ENCODE measurements at regions of chr2 and their contacts with region 1.

Region 1: DNA sequence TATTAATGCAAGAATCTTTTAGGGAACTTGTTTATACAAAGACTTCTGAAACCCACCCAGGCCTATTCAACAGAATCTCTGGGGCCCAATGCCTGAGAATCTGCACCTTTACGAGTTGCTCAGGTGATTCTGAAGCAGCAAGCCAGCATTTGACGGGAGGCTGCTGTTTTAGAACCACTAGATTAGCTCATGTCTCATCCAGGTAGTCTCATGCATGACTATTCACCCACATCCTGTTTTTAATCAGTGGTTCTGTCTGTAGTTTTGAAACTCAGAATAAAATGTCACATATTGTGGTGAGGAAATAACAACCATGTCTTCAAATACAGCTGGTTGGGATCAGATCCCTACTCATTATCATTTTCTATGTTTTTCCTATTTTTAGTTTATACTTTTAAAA is 39.5 kb downstream of the CYTIP start:
- DNase-seq: peak; percentile 85
- ATAC-seq: peak; percentile 99
- H3K4me3 ChIP-seq: no peak overlapping the region
- H3K27ac ChIP-seq: no peak overlapping the region; the same call in 1 of the 2 replicates
- H3K4me1 ChIP-seq: peaks cover 7% of the 10 kb centered on the region
- H3K27me3 ChIP-seq: no peaks in the 10 kb centered on the region
- CTCF ChIP-seq: no peak
- EP300 ChIP-seq: peak; percentile 87 to 92
- POLR2A ChIP-seq: no peak
- RAD21 ChIP-seq: 0 out of 2 replicates have a peak, but pooled peaks have one; percentile 17

Region 2: GRCh38 chr2:157363612-157364101 is 40.7 kb before region 1 on chr2:
- CTCF ChIA-PET with region 1: interaction called, 13 read pairs
- POLR2A ChIA-PET with region 1: interaction called, 3 read pairs
- RAD21 ChIA-PET with region 1: interaction called, 21 read pairs
- SMC1A ChIA-PET with region 1: interaction called, 44 read pairs
- in situ Hi-C with region 1: no loop called
- intact Hi-C with region 1: loop called (anchors 2 kb)
- DNase-seq: peak; percentile 50
- ATAC-seq: peak; percentile 72
- H3K4me3 ChIP-seq: no peak overlapping the region
- H3K27ac ChIP-seq: peak overlapping the region; percentile 56
- H3K4me1 ChIP-seq: peaks cover 14% of the 10 kb centered on the region
- H3K27me3 ChIP-seq: no peaks in the 10 kb centered on the region
- CTCF ChIP-seq: no peak
- EP300 ChIP-seq: no peak
- POLR2A ChIP-seq: no peak
- RAD21 ChIP-seq: no peak

Region 3: DNA sequence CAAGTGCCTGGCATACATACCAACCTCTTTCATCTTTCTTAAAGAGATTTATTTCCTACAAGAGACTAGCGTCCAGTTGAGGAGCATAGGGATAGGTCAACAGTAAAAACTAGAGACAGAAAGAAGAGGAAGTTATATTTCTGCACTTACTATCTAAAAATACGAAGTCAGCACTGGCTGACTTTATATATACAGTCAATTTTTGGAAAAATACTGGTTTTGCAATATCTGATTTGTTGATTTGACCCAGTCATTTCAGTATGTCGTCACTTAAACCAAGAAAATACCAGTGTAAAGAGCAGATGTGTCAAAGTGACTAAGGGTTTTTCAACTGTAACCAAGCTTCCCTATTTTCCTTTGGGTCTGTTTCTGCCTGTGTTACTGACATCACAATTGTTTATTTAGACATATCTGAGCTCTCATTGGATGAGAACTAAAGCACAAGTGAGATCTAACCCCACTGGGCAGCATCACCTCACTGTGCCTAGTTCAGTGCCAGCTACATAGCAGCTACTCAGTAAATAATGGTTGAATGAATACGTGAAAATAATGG is 16.5 kb after region 1 on chr2:
- CTCF ChIA-PET with region 1: interaction called, 3 read pairs
- POLR2A ChIA-PET with region 1: no interaction called
- RAD21 ChIA-PET with region 1: interaction called, 36 read pairs
- SMC1A ChIA-PET with region 1: interaction called, 55 read pairs
- in situ Hi-C with region 1: no loop called
- intact Hi-C with region 1: no loop called
- DNase-seq: no peak
- ATAC-seq: peak; percentile 74
- H3K4me3 ChIP-seq: no peak overlapping the region
- H3K27ac ChIP-seq: peak overlapping the region; percentile 60
- H3K4me1 ChIP-seq: peaks cover 34% of the 10 kb centered on the region
- H3K27me3 ChIP-seq: no peaks in the 10 kb centered on the region
- CTCF ChIP-seq: no peak
- EP300 ChIP-seq: peak in 1 of 2 experiments; percentile 73; a peak in 2 of 4 replicates
- POLR2A ChIP-seq: no peak
- RAD21 ChIP-seq: no peak

Region 4: GRCh38 chr2:157572725-157573124 is 168.4 kb after region 1 on chr2:
- CTCF ChIA-PET with region 1: no interaction called
- POLR2A ChIA-PET with region 1: no interaction called
- RAD21 ChIA-PET with region 1: no interaction called
- SMC1A ChIA-PET with region 1: no interaction called
- in situ Hi-C with region 1: no loop called
- intact Hi-C with region 1: no loop called
- DNase-seq: no peak
- ATAC-seq: peak; percentile 65; the same call in 2 of the 3 replicates
- H3K4me3 ChIP-seq: no peak overlapping the region
- H3K27ac ChIP-seq: no peak overlapping the region
- H3K4me1 ChIP-seq: no peaks in the 10 kb centered on the region
- H3K27me3 ChIP-seq: no peaks in the 10 kb centered on the region
- CTCF ChIP-seq: peak; percentile 14 to 39 (median 32); a peak in 1 of 6 replicates
- EP300 ChIP-seq: no peak
- POLR2A ChIP-seq: no peak
- RAD21 ChIP-seq: no peak

Region 5: GRCh38 chr2:157620956-157621355 is 216.6 kb after region 1 on chr2:
- CTCF ChIA-PET with region 1: no interaction called
- POLR2A ChIA-PET with region 1: no interaction called
- RAD21 ChIA-PET with region 1: no interaction called
- SMC1A ChIA-PET with region 1: no interaction called
- in situ Hi-C with region 1: no loop called
- intact Hi-C with region 1: no loop called
- DNase-seq: no peak
- ATAC-seq: no peak
- H3K4me3 ChIP-seq: no peak overlapping the region
- H3K27ac ChIP-seq: no peak overlapping the region
- H3K4me1 ChIP-seq: no peaks in the 10 kb centered on the region
- H3K27me3 ChIP-seq: no peaks in the 10 kb centered on the region
- CTCF ChIP-seq: no peak
- EP300 ChIP-seq: no peak
- POLR2A ChIP-seq: no peak
- RAD21 ChIP-seq: no peak

Region 6: GRCh38 chr2:157684940-157685466 is 280.6 kb after region 1 on chr2:
- CTCF ChIA-PET with region 1: no interaction called
- POLR2A ChIA-PET with region 1: no interaction called
- RAD21 ChIA-PET with region 1: no interaction called
- SMC1A ChIA-PET with region 1: no interaction called
- in situ Hi-C with region 1: no loop called
- intact Hi-C with region 1: no loop called
- DNase-seq: no peak
- ATAC-seq: no peak
- H3K4me3 ChIP-seq: no peak overlapping the region
- H3K27ac ChIP-seq: no peak overlapping the region
- H3K4me1 ChIP-seq: no peaks in the 10 kb centered on the region
- H3K27me3 ChIP-seq: no peaks in the 10 kb centered on the region
- CTCF ChIP-seq: no peak
- EP300 ChIP-seq: no peak
- POLR2A ChIP-seq: no peak
- RAD21 ChIP-seq: no peak

Region 7: GRCh38 chr2:157751462-157752058 is 347.2 kb after region 1 on chr2:
- CTCF ChIA-PET with region 1: no interaction called
- POLR2A ChIA-PET with region 1: no interaction called
- RAD21 ChIA-PET with region 1: no interaction called
- SMC1A ChIA-PET with region 1: no interaction called
- in situ Hi-C with region 1: no loop called
- intact Hi-C with region 1: no loop called
- DNase-seq: peak; percentile 36
- ATAC-seq: peak; percentile 79
- H3K4me3 ChIP-seq: no peak overlapping the region
- H3K27ac ChIP-seq: no peak overlapping the region
- H3K4me1 ChIP-seq: no peaks in the 10 kb centered on the region; the same call in 1 of the 2 replicates
- H3K27me3 ChIP-seq: no peaks in the 10 kb centered on the region
- CTCF ChIP-seq: peak; percentile 27 to 40 (median 38); a peak in 5 of 6 replicates
- EP300 ChIP-seq: no peak
- POLR2A ChIP-seq: no peak
- RAD21 ChIP-seq: peak; percentile 35; the same call in 1 of the 2 replicates

Measured in GM12878 (cell line).